ENCODE measurements at regions of chr14 and their contacts with region 1.

Region 1: GRCh38 chr14:59126710-59127432 is 61.6 kb upstream of the DAAM1 start:
- DNase-seq: peak; percentile 64
- H3K4me3 ChIP-seq: no peak overlapping the region
- H3K27ac ChIP-seq: no peak overlapping the region
- H3K4me1 ChIP-seq: no peaks in the 10 kb centered on the region
- H3K27me3 ChIP-seq: peaks cover 5 to 6% of the 10 kb centered on the region in 2 experiments
- CTCF ChIP-seq: peak; percentile 58 to 60
- POLR2A ChIP-seq: no peak

Region 2: GRCh38 chr14:59422069-59422881 is 295.4 kb after region 1 on chr14:
- CTCF ChIA-PET with region 1: interaction called, 4 read pairs
- POLR2A ChIA-PET with region 1: no interaction called
- dilution Hi-C with region 1: no loop called
- intact Hi-C with region 1: loop called (anchors 1 kb)
- DNase-seq: peak; percentile 29
- H3K4me3 ChIP-seq: no peak overlapping the region
- H3K27ac ChIP-seq: no peak overlapping the region
- H3K4me1 ChIP-seq: no peaks in the 10 kb centered on the region
- H3K27me3 ChIP-seq: no peaks in the 10 kb centered on the region
- CTCF ChIP-seq: peak; percentile 4 to 9
- POLR2A ChIP-seq: no peak

Region 3: GRCh38 chr14:59576332-59577294 is 449.7 kb after region 1 on chr14 and contains the start of gene CCDC175:
- CTCF ChIA-PET with region 1: interaction called, 11 read pairs
- POLR2A ChIA-PET with region 1: no interaction called
- dilution Hi-C with region 1: no loop called
- intact Hi-C with region 1: loop called (anchors 1 kb)
- DNase-seq: peak; percentile 63
- H3K4me3 ChIP-seq: peak within 1 kb of the TSS in 2 of 3 experiments; percentile 18 to 38
- H3K27ac ChIP-seq: no peak within 1 kb of the TSS
- H3K4me1 ChIP-seq: no peaks in the 10 kb centered on the region
- H3K27me3 ChIP-seq: peaks cover 0 to 13% of the 10 kb centered on the region in 2 experiments
- CTCF ChIP-seq: peak; percentile 81 to 84
- POLR2A ChIP-seq: no peak
- total RNA-seq, gene CCDC175: not detected in 2 replicates

Measured in endothelial cell of umbilical vein (primary cell).